IMR-90 (cell line): ENCODE measurements at regions of chr16 and their contacts with region 1.

Region 1: GRCh38 chr16:53054670-53055485 is at the start of gene CHD9:
- DNase-seq: peak; percentile 80
- ATAC-seq: peak; percentile 78
- H3K4me3 ChIP-seq: peak within 1 kb of the TSS; percentile 62
- H3K27ac ChIP-seq: peak within 1 kb of the TSS; percentile 91
- H3K4me1 ChIP-seq: peaks cover 20% of the 10 kb centered on the region
- H3K27me3 ChIP-seq: no peaks in the 10 kb centered on the region
- CTCF ChIP-seq: peak; percentile 98
- POLR2A ChIP-seq: no peak; the same call in 1 of the 2 replicates
- RAD21 ChIP-seq: peak; percentile 97
- total RNA-seq, gene CHD9: 48.8 and 61.4 TPM in 2 replicates

Region 2: DNA sequence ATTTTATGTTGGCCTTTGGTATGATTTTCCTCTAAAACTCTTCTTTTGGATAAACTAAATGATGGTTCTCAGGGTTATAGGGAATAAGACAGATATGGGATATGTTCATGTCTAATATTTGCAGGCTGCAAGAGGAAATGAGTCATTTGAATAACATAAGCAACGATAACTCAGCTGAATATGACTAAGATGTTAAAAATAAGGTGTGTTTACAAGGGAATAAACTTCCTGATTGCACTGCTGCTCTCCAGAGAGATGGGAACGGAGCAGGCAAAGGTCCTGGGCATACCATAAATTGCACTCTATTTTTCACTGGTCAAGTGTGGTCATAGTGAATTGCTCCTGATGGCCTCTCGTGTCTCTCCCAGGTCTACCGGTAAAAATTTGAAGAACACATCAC is 1174.1 kb before region 1 on chr16:
- CTCF ChIA-PET with region 1: no interaction called
- POLR2A ChIA-PET with region 1: no interaction called
- dilution Hi-C with region 1: no loop called
- in situ Hi-C with region 1: loop called (anchors 25 kb)
- intact Hi-C with region 1: no loop called
- DNase-seq: peak; percentile 98
- ATAC-seq: peak; percentile 80
- H3K4me3 ChIP-seq: no peak overlapping the region
- H3K27ac ChIP-seq: peak overlapping the region; percentile 100
- H3K4me1 ChIP-seq: peaks cover 38% of the 10 kb centered on the region
- H3K27me3 ChIP-seq: no peaks in the 10 kb centered on the region
- CTCF ChIP-seq: no peak
- POLR2A ChIP-seq: peak; percentile 40; the same call in 1 of the 2 replicates
- RAD21 ChIP-seq: no peak

Region 3: DNA sequence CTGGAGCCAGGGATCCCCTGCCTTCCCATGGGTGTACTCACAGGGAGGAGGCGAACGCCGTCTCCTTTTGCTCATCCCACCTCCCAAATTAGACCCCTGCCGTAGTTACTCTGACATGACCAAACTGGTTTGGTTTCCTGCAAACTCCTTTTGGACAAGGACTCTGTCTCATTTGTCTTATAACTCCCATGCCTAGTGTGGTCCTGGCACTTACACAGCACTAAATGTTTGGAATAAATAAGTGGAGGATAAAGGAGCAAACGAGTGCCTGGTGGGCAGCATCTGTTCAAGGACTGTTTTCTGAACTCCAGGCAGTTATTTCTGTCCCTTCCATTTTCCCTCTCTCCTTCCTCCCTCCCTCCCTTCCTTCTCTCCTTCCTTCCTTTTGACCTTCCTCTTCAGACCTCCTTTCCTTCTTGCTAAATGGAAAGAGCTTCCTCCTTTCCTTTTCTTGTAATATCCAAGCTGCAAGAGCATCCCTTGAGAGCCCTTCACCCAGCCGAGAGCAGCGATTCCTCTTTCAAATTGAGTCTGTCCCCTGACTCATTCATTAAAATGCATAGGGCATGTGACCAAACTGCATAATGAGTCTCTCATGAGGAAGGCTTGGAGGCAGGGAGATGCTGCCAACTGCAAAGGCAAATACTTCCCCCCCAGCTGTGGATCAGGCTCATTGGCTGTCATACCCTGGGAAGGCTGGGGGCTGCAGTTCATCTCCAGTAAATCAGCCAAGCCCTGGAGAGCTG is 36.8 kb after region 1 on chr16:
- CTCF ChIA-PET with region 1: interaction called, 3 read pairs
- POLR2A ChIA-PET with region 1: no interaction called
- dilution Hi-C with region 1: no loop called
- in situ Hi-C with region 1: no loop called
- intact Hi-C with region 1: loop called (anchors 2 kb)
- DNase-seq: peak; percentile 92
- ATAC-seq: peak; percentile 48
- H3K4me3 ChIP-seq: no peak overlapping the region; the same call in 1 of the 2 replicates
- H3K27ac ChIP-seq: peak overlapping the region; percentile 81
- H3K4me1 ChIP-seq: peaks cover 16% of the 10 kb centered on the region
- H3K27me3 ChIP-seq: no peaks in the 10 kb centered on the region
- CTCF ChIP-seq: no peak
- POLR2A ChIP-seq: no peak
- RAD21 ChIP-seq: no peak; the same call in 1 of the 2 replicates

Region 4: GRCh38 chr16:53130159-53131049 is 75.5 kb after region 1 on chr16:
- CTCF ChIA-PET with region 1: interaction called, 17 read pairs
- POLR2A ChIA-PET with region 1: no interaction called
- dilution Hi-C with region 1: no loop called
- in situ Hi-C with region 1: loop called (anchors 5 kb)
- intact Hi-C with region 1: loop called (anchors 1 kb)
- DNase-seq: peak; percentile 92
- ATAC-seq: peak; percentile 89
- H3K4me3 ChIP-seq: peak overlapping the region; percentile 60
- H3K27ac ChIP-seq: peak overlapping the region; percentile 94
- H3K4me1 ChIP-seq: peaks cover 7% of the 10 kb centered on the region
- H3K27me3 ChIP-seq: no peaks in the 10 kb centered on the region
- CTCF ChIP-seq: peak; percentile 90
- POLR2A ChIP-seq: peak; percentile 38
- RAD21 ChIP-seq: peak; percentile 75

Region 5: GRCh38 chr16:53207810-53208752 is 153.2 kb after region 1 on chr16:
- CTCF ChIA-PET with region 1: interaction called, 16 read pairs
- POLR2A ChIA-PET with region 1: no interaction called
- dilution Hi-C with region 1: no loop called
- in situ Hi-C with region 1: loop called (anchors 10 kb)
- intact Hi-C with region 1: loop called (anchors 1 kb)
- DNase-seq: peak; percentile 83
- ATAC-seq: peak; percentile 91
- H3K4me3 ChIP-seq: peak overlapping the region; percentile 88
- H3K27ac ChIP-seq: peak overlapping the region; percentile 92
- H3K4me1 ChIP-seq: no peaks in the 10 kb centered on the region; the same call in 1 of the 2 replicates
- H3K27me3 ChIP-seq: no peaks in the 10 kb centered on the region
- CTCF ChIP-seq: peak; percentile 72
- POLR2A ChIP-seq: no peak
- RAD21 ChIP-seq: peak; percentile 64

Region 6: GRCh38 chr16:53282975-53283946 is 228.4 kb after region 1 on chr16:
- CTCF ChIA-PET with region 1: interaction called, 5 read pairs
- POLR2A ChIA-PET with region 1: no interaction called
- dilution Hi-C with region 1: no loop called
- in situ Hi-C with region 1: no loop called
- intact Hi-C with region 1: loop called (anchors 2 kb)
- DNase-seq: peak; percentile 49
- ATAC-seq: no peak
- H3K4me3 ChIP-seq: no peak overlapping the region
- H3K27ac ChIP-seq: no peak overlapping the region
- H3K4me1 ChIP-seq: no peaks in the 10 kb centered on the region
- H3K27me3 ChIP-seq: no peaks in the 10 kb centered on the region
- CTCF ChIP-seq: peak; percentile 50
- POLR2A ChIP-seq: no peak
- RAD21 ChIP-seq: peak; percentile 57